Dorsolateral prefrontal cortex (tissue), 120 donors: ENCODE measurements at regions of chr1 and their contacts with region 1.

Region 1: DNA sequence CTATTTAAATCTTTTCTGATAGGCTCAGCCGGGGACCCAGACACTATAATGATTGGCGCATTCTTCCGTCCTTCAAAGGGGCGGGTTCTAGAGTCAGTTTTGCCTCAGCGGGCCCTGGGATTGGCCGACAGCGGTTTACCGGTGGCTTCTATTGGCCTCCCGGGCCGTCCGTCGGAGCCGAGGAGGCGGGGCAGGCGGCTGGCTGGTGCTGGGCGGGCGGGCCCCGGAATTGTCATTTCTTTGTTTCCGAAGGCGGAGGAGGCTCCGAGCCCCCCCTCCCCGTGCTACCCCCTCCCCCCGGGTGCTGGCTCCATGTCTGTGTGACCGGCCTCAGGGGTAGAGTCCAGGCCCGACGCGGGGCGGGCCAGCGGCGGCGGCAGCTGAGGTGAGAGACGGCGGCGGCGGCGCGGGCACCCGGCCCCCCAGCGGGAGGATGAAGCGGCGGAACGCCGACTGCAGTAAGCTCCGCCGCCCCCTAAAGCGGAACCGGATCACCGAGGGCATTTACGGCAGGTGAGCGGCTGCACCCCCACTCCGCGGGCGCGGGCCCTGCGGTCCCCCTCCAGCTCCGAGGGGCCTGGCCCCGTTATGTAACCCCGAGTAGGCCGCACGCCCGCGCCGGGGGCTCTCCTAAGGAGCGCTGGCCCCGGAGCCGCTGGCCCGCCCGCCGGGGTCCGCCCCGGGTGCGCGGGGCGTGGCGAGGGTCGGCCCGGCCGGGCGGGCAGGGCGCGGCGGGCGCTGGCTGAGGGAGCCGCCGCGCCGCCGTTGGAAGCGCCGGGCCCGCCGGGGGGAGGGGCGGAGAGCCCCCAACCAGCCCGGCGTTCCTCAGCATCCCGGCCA is at the start of gene MACO1:
- DNase-seq: peak; percentile 97 to 99 (median 99)
- H3K4me3 ChIP-seq: peak within 1 kb of the TSS; percentile 66 to 100 (median 92)
- H3K27ac ChIP-seq: peak within 1 kb of the TSS; percentile 82 to 100 (median 99)
- H3K27me3 ChIP-seq: no peaks in the 10 kb centered on the region
- CTCF ChIP-seq: peak in 7 of 56 donors; percentile 6 to 29 (median 12)
- total RNA-seq, gene MACO1: 18.5 to 37.8 (median 29.8) TPM

Region 2: DNA sequence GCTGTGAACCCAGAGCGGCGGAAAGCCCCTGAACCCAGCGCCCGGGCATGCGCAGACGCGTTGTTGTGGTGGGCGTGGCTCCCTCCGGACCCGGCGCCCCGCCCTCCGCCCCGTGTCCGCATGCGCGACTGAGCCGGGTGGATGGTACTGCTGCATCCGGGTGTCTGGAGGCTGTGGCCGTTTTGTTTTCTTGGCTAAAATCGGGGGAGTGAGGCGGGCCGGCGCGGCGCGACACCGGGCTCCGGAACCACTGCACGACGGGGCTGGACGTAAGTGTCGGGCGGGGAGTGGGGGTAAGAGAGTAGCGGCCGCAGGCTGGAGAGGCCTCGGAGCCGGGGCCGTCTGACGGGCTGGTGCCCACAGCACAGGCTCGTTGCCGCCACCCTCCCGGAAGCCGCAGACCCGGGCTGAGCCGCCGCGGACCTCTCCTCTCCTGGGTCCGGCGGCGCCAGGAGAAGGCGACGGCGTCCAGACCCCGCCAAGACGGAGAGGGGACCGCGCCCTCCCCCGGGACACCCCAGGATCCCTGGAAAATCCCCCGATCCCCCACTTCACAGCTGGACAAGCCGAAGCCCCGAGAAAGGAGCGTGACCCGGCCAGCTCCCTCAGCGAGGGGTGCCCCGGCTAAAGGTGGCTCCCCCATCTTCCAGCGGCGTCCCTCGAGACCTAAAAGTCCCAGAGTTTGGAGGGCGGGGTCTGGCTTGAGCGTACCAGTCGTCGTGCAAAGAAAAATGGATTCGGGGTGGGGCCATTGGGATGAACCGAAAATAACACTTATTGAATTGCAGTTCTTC is 92.5 kb before region 1 on chr1 and contains the start of gene TMEM50A:
- intact Hi-C with region 1: loop called in 1 of 2 experiments (anchors 2 kb)
- DNase-seq: peak; percentile 83 to 90 (median 89)
- H3K4me3 ChIP-seq: peak within 1 kb of the TSS; percentile 60 to 98 (median 91)
- H3K27ac ChIP-seq: peak within 1 kb of the TSS; percentile 58 to 99 (median 97)
- H3K27me3 ChIP-seq: no peaks in the 10 kb centered on the region
- CTCF ChIP-seq: peak in 5 of 56 donors; percentile 3 to 16 (median 11)
- total RNA-seq, gene TMEM50A: 45.9 to 98.2 (median 68.2) TPM

Region 3: GRCh38 chr1:25610822-25611630 is 180.1 kb after region 1 on chr1:
- intact Hi-C with region 1: loop called in 1 of 2 experiments (anchors 5 kb)
- DNase-seq: no peak
- H3K4me3 ChIP-seq: no peak overlapping the region
- H3K27ac ChIP-seq: peak overlapping the region in 1 of 59 donors; percentile 48
- H3K27me3 ChIP-seq: no peaks in the 10 kb centered on the region
- CTCF ChIP-seq: peak in 3 of 56 donors; percentile 7 to 13 (median 11)

Region 4: DNA sequence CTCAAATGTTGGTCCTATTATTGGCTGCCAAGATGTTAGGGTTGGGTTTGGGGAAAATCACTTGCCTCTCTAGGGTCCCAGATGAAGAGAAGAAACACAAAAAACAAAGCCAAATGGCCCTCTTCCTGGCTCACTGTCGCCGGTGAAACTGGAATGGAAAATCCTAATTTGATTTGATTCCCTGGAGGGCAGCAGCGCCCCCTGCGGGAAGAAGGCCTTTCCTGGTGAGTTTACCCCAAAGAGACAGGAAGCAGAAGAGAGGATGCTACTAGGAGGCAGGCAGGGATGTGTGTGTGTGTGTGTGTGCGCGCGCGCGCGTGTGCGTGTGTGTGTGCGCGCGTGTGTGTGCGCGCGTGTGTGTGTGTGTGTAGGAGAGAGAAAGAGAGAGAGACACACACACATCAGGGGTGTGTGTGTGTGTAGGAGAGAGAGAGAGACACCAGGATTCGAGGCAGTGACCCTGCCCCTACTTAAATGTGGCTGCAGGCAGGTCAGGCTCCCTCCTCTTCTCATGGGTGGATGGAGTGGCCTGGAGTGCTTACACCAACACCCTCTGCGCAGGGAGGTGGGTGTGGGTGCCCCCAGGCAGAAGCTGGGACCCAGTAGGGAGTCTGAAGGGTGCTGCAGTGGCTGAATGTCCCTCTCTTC is 366.0 kb after region 1 on chr1:
- intact Hi-C with region 1: loop called in 1 of 2 experiments (anchors 10 kb)
- DNase-seq: peak; percentile 70 to 93 (median 83)
- H3K4me3 ChIP-seq: peak overlapping the region in 3 of 59 donors; percentile 2 to 17 (median 5)
- H3K27ac ChIP-seq: peak overlapping the region in 40 of 59 donors; percentile 0 to 95 (median 46)
- H3K27me3 ChIP-seq: no peaks in the 10 kb centered on the region
- CTCF ChIP-seq: peak; percentile 44 to 88 (median 73)